ENCODE measurements at regions of chrX and their contacts with region 1.

Region 1: DNA sequence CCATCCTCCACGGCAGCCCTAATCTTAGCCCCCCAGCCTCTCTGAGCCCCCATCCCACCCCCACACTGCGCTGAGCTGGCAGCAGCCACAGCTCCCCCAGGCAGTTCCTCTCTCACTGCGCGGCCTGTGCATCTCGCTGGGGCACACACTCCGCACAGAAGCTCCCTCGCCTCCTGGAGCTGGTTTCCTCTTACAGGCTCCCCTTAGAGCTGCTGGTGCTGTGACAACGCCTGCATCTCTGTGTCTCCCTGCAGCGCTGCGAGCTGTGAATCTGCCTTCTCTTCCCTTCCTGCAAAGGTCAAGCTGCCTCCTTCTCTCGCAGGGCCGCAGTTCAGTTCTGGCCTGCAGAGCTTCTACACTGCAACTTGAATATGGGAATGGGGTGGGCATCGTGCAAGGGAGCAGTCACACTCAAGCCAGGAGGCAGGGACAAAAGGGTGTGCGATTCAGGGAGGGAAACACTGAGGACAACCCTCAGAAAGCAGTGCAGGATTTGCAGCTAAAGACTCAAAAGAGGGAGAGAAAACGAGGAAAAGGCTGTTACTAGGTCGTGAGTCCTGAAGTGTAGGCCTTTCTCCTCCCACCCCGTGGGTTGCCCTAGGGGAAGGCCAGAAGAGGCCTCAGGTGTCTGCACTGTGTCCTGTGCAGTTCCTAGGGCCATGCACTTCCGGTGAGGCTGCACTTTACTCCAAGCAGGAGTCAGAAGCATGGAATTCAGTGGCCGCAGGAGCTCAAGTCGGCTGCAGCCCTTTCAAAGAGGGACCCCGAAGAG is 87.0 kb downstream of the BCOR start:
- DNase-seq: no peak
- H3K4me3 ChIP-seq: no peak overlapping the region
- H3K4me3 Mint-ChIP-seq: peak overlapping the region in 6 of 7 donors; percentile 14 to 82 (median 62)
- H3K27ac ChIP-seq: no peak overlapping the region
- H3K27ac Mint-ChIP-seq: peak overlapping the region in 2 of 8 donors; percentile 42 to 70
- H3K4me1 ChIP-seq: peaks cover 10% of the 10 kb centered on the region
- H3K4me1 Mint-ChIP-seq: peaks cover 18 to 39% (median 22%) of the 10 kb centered on the region in 3 donors
- H3K27me3 ChIP-seq: no peaks in the 10 kb centered on the region
- H3K27me3 Mint-ChIP-seq: peaks cover 18 to 41% of the 10 kb centered on the region in 2 donors

Region 2: DNA sequence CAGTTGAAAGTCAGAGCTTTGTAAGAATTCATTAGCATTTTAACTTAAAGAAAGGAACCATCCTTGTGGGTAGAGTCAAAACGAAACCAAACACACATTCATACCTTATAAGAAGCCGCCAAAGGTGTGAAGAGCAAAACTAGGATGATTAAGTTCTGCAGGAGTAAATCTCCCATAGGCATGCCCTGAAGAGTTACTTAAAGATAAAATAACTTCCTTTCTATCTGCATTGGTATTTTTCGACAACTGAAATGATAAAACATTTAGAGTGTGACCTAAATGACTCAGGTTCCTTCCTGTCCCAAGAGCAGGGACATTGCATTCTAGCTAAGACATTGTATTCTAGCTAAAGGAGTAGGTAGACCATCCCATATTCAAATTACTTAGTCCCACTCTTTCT is 11.7 kb after region 1 on chrX:
- CTCF ChIA-PET with region 1: interaction called, 3 read pairs
- POLR2A ChIA-PET with region 1: interaction called, 13 read pairs
- DNase-seq: no peak
- H3K4me3 ChIP-seq: no peak overlapping the region
- H3K4me3 Mint-ChIP-seq: peak overlapping the region in 4 of 7 donors; percentile 29 to 53 (median 40)
- H3K27ac ChIP-seq: no peak overlapping the region
- H3K27ac Mint-ChIP-seq: peak overlapping the region in 3 of 8 donors; percentile 25 to 65 (median 31)
- H3K4me1 ChIP-seq: peaks cover 9% of the 10 kb centered on the region
- H3K4me1 Mint-ChIP-seq: peaks cover 12 to 21% (median 20%) of the 10 kb centered on the region in 3 donors
- H3K27me3 ChIP-seq: no peaks in the 10 kb centered on the region
- H3K27me3 Mint-ChIP-seq: peaks cover 0 to 9% of the 10 kb centered on the region in 2 donors

Measured in CD8-positive, alpha-beta memory T cell (primary cell).